ENCODE measurements at regions of chr14 and their contacts with region 1.

Region 1: DNA sequence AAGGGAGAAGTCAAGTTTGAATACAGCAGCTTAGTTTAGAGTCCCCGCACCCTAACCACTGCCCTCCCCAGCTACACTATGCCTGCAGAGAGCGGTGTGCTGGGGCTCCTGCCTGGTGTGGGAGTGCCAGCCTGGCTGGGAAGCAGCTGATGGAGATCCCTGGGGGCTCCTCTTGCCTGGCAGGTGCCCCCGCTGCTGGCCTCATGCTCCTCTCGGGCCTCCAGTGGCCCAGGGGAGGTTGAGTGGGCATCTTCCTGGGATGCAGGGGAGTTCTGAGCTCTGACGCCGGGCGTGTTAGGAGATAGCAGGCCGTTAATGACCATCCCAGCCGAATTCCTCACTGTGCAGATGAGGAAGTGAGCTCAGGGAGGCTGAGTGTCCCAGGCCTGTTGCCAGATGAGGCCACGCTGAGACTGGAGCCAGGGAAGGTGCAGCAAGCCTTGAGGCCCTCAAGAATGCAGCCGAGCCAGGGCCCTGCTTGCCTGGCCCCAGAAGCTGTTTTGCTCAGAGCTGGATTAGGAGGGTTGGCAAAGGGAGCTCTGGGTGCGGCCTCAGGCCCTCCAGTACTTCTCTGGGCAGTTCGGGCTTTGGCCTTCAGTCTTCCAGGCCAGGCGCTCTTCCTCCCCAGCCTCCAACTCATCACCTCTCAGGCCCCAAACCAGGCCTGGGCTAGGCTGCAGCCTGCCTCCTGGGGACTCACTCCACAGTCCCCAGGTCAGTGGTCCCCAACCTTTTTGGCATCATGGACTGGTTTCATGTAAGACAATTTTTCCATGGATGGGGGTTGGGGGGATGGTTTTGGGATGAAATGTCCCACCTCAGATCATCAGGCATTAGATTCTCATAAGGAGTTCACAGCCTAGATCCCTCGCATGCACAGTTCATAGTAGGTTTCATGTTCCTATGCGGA is 6.6 kb upstream of the CYP46A1 start:
- DNase-seq: no peak
- H3K4me3 ChIP-seq: no peak overlapping the region
- H3K27ac ChIP-seq: no peak overlapping the region
- H3K4me1 ChIP-seq: peaks cover 3 to 9% (median 8%) of the 10 kb centered on the region in 4 experiments; a peak in 6 of 7 replicates
- H3K27me3 ChIP-seq: no peaks in the 10 kb centered on the region
- CTCF ChIP-seq: no peak
- EP300 ChIP-seq: no peak
- POLR2A ChIP-seq: no peak
- RAD21 ChIP-seq: no peak

Region 2: GRCh38 chr14:99664058-99664936 is 13.2 kb before region 1 on chr14:
- CTCF ChIA-PET with region 1: interaction called, 26 read pairs
- POLR2A ChIA-PET with region 1: interaction called, 4 read pairs
- DNase-seq: peak; percentile 88 to 89
- H3K4me3 ChIP-seq: peak overlapping the region in 3 of 4 experiments; percentile 8 to 28 (median 17); a peak in 3 of 8 replicates
- H3K27ac ChIP-seq: no peak overlapping the region; the same call in 1 of the 2 replicates
- H3K4me1 ChIP-seq: peaks cover 13 to 48% (median 29%) of the 10 kb centered on the region in 4 experiments
- H3K27me3 ChIP-seq: peaks cover 0 to 4% (median 2%) of the 10 kb centered on the region in 4 experiments; a peak in 2 of 7 replicates
- CTCF ChIP-seq: peak in 2 of 3 experiments; percentile 36 to 46; a peak in 3 of 4 replicates
- EP300 ChIP-seq: peak; percentile 8 to 93; a peak in 2 of 3 replicates
- POLR2A ChIP-seq: no peak
- RAD21 ChIP-seq: peak in 1 of 2 experiments; percentile 38; a peak in 1 of 4 replicates

Region 3: GRCh38 chr14:99802301-99803105 is 125.0 kb after region 1 on chr14:
- CTCF ChIA-PET with region 1: no interaction called
- POLR2A ChIA-PET with region 1: no interaction called
- DNase-seq: no peak
- H3K4me3 ChIP-seq: no peak overlapping the region
- H3K27ac ChIP-seq: no peak overlapping the region
- H3K4me1 ChIP-seq: peaks cover 0 to 3% (median under 1%) of the 10 kb centered on the region in 4 experiments; a peak in 2 of 7 replicates
- H3K27me3 ChIP-seq: no peaks in the 10 kb centered on the region
- CTCF ChIP-seq: no peak
- EP300 ChIP-seq: no peak
- POLR2A ChIP-seq: no peak
- RAD21 ChIP-seq: no peak